AG04449 (cell line): ENCODE measurements at regions of chr1 and their contacts with region 1.

Region 1: DNA sequence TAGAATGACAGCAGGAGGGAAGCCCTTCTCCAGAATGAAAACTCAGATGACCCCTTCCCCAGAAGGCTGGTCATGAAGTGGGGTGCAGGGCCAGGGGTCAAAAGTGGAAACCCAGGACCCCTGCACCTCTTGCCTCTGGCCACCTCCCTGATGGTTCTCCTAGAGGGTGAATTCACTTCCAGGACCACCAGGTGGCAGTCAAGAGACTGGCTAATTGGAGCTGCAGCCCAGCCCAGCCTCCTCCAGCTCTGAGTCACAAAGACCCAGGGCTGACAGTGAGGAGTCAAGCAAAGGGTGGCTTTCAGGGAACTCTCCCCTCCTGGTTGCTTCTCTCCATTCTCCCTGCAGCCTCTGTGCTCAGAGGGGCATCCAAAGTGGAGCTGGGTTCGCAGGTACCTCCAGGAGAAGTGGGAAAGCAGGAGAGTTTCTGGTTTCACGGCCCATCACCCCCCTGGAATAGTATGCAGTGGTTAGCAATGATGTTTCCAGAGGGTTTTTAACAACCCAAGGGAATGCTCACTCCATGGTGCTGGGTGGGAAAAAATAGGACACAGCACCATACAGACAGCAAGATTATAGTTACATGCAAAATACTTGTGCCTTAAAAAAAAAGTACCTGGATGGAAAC is 6.1 kb upstream of the EPHB2 start:
- DNase-seq: peak; percentile 24
- H3K4me3 ChIP-seq: no peak overlapping the region
- CTCF ChIP-seq: peak; percentile 88

Region 2: DNA sequence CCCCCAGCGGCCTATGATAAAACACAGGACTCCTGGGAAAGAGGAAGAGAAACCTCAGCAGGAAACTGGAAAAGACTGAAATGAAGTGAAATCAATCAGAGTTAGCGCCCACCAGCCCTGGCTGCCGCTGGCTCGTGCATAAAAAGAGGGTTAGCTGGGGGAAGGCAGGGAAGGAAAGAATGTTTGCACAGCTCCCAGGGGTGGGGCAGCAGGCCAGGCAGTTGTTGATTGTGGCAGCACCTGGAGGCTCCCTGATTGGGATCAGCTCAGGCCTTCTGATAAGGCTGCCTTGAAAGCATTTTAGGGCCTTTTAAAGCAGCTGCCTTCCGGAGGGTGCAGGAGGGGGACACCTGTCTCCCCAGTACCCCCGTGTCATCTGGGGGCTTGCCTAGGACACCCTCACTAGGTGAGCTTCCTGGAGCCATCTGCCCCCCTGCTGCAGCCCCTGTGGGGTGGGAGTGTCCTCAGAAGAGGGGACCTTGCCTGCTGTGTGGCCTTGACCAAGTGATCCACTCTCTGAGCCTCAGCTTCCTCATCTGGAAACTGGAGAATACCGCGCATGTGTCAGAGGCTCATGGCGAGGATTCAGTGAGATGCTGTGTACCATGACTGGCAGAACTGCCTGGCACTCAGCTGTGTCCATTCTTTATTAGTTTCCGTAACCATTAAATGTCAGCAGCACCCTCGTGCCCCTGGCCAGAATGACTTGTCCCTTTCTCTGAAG is 12.6 kb after region 1 on chr1:
- CTCF ChIA-PET with region 1: interaction called, 44 read pairs
- POLR2A ChIA-PET with region 1: no interaction called
- DNase-seq: no peak
- H3K4me3 ChIP-seq: no peak overlapping the region
- CTCF ChIP-seq: no peak

Region 3: GRCh38 chr1:22745669-22746585 is 41.4 kb after region 1 on chr1:
- CTCF ChIA-PET with region 1: interaction called, 14 read pairs
- POLR2A ChIA-PET with region 1: no interaction called
- DNase-seq: no peak
- H3K4me3 ChIP-seq: no peak overlapping the region
- CTCF ChIP-seq: no peak

Region 4: DNA sequence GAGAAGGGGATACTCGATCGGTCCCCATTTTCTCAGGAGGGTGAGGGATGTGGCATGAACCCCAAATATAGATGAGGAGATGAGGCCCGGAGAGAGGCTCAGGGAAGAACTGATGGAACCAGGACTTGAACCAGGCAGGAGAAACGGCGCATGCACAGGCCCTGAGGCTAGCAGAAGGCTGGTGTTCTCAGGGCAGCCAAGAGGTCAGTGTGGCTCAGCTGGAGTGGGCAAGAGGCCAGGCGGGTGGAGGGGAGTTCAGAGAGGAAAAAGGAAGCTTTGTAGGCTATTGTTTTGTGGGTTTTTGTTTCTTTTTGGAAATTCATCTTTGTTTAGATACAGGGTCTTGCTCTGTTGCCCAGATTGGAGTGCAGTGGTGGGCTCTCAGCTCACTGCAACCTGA is 146.1 kb after region 1 on chr1:
- CTCF ChIA-PET with region 1: interaction called, 17 read pairs
- POLR2A ChIA-PET with region 1: no interaction called
- DNase-seq: no peak
- H3K4me3 ChIP-seq: no peak overlapping the region
- CTCF ChIP-seq: no peak

Region 5: DNA sequence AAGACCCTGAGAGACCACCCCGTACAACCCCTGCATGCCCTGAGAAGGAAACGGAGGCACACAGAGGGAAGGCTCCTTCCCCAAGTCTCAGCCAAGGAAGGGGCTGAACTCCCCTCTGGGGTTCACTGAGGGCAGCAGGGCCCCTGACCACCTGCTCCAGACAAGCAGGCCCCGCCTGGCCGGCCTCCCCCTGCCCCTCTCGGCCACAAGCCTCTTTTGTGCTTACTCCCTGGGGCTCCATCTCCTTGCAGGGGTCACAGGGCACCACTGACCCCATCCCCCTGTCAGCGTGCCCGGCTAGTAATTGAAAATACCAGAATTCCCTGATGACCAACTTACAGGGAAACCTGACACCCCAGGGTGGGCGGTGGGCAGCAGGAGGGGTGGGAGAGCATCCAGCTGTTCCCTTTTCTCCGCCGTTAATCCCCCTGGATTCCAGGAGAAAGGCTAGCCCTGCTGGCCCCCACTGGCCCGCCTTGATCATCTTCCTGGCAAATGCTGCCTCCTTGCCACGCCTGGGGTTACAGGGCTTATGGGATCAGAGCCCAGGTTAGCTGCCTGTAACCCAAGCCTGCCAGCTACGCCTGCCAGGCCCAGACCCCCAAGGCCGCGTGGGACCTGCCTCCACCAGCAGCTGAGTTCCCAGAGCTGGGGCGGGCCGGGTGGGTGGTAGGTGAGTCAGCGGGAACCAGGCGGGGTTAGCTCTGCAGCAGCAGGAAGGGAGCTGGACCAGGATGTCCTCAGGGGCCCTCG is 172.0 kb after region 1 on chr1:
- CTCF ChIA-PET with region 1: interaction called, 24 read pairs
- POLR2A ChIA-PET with region 1: no interaction called
- DNase-seq: no peak
- H3K4me3 ChIP-seq: no peak overlapping the region
- CTCF ChIP-seq: no peak

Region 6: DNA sequence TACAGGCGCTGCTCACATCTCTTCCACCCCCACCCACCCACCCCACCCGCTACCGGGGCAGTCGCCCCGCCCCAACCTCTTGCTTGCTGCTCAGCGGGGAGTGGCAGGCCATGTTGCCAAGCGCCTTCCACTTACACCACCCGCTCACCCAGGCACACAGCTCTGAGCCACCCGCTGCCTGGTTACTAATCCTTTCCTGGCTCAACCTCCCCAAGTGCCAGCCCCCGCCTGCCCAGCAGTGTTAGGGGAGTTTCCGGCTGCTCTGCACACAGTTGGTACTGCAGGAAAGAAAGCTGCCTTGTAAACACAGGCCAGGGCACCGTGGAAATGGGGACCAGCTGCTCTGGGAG is 211.9 kb after region 1 on chr1:
- CTCF ChIA-PET with region 1: interaction called, 74 read pairs
- POLR2A ChIA-PET with region 1: no interaction called
- DNase-seq: no peak
- H3K4me3 ChIP-seq: no peak overlapping the region
- CTCF ChIP-seq: no peak